ENCODE measurements at regions of chr1 and their contacts with region 1.

Region 1: DNA sequence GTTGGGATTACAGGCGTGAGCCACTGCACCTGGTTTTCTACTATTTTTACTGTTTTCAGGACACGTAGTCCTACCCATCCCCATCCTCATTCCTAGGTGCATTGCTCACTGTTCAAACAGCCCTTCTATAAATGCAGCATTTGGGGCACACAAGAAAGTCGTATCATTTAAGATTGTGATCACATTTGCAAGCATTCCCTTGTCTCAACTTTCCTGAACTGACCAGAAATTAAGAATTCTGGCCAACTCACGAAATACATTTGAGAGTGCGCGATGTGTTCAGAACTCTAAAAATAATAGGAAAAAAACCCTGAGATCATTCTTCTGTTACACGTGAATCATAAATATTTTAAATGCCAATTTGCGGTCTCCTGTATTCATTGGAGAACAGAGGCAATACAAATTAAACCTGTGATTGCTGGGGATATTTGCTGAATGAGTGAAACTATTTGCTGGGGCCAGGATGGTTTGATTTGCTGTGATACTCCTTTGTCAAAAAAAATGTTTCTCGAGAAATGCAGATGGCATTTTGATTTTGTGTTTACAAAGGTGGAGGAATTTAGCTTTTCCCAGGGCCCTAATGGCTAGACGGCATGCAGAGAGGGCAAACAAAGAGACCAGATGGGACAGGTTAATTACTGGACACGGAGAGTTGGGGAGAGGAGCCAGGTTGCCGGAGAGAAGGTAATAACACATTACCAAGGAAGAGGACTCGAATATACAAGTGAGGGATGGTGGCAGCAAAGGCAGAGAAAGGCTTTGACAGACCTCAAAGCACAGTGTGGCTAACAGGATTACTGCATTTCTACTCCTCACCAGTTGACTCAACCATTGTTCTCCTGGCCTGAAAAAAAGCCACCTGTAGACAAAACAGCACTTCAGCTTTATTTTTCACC is 38.4 kb downstream of the STPG1 start:
- DNase-seq: peak in 1 of 2 experiments; percentile 41
- H3K4me3 ChIP-seq: no peak overlapping the region
- H3K27ac ChIP-seq: no peak overlapping the region
- H3K4me1 ChIP-seq: peaks cover 0 to 13% (median 6%) of the 10 kb centered on the region in 4 experiments; a peak in 3 of 7 replicates
- H3K27me3 ChIP-seq: no peaks in the 10 kb centered on the region
- CTCF ChIP-seq: no peak
- EP300 ChIP-seq: 0 out of 3 replicates have a peak, but pooled peaks of 1 of the 2 experiments have one; percentile 68
- POLR2A ChIP-seq: no peak
- RAD21 ChIP-seq: no peak

Region 2: DNA sequence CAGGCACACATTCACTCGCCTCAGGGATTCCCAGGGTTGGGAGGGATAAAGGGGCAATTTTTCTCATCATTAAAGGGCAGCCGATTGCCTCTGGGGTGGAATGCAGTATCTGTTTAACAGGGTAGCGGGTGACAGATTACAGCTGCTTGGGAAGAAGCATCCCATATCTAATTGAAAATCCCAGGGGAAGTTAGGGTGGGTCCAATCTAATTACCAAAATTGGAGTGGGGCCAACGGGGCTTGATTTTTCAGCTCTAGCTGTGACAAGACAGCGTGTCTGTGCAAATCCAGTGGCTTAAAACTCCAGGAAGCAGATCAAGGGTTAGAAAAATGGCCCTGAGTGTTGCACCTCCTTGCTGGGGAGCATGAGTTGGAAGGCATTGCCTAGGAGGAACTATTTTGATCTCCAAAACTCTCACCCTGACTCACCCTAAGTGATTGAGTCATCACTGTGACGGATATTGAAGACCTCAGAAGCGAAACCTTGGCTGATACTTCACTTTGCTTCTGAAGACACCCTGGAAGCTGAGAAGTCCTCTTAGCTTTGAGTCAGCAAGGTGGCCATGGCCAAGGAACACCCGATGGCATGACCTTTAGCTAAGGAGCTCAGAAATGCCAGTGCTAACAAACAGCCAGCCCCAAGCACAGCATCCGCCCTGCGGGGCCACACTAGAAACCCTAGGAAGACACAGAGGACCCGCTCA is 10.0 kb before region 1 on chr1:
- CTCF ChIA-PET with region 1: interaction called, 13 read pairs
- POLR2A ChIA-PET with region 1: no interaction called
- DNase-seq: no peak
- H3K4me3 ChIP-seq: no peak overlapping the region
- H3K27ac ChIP-seq: no peak overlapping the region
- H3K4me1 ChIP-seq: no peaks in the 10 kb centered on the region; a peak in 2 of 7 replicates
- H3K27me3 ChIP-seq: no peaks in the 10 kb centered on the region
- CTCF ChIP-seq: no peak
- EP300 ChIP-seq: no peak
- POLR2A ChIP-seq: no peak
- RAD21 ChIP-seq: no peak

Region 3: DNA sequence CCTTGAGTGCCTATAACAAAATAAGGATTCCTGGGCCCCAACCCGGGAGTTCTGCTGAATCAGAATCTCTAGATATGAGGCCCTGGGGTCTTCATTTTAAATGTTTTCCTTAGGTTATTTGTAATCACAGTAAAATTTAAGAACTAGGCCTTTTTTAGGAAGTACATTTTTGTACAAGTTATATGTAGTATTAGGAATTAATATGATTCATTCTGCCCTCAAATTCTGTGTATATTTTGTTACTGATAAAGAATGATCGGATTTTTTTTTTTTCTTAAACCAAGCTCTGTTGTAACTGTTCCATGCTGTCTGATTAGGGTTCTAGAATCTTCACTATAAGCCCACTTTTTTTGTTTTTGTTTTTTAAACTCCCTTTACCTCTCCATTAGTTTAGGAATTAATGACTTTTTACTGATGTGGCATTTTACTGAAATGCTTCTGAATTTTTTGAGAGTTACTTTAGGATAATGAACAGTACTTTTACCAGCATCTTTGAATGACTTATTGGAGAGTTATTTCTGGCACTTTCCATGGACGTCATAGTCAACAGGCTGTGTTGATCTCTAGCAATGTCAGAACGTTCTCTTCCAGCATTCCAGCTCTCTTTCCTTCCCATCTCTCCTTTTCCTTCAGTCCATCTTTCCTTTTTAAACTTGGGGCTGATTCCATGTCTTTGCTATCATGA is 418.4 kb after region 1 on chr1:
- CTCF ChIA-PET with region 1: no interaction called
- POLR2A ChIA-PET with region 1: no interaction called
- DNase-seq: no peak
- H3K4me3 ChIP-seq: no peak overlapping the region
- H3K27ac ChIP-seq: no peak overlapping the region
- H3K4me1 ChIP-seq: no peaks in the 10 kb centered on the region
- H3K27me3 ChIP-seq: no peaks in the 10 kb centered on the region
- CTCF ChIP-seq: no peak
- EP300 ChIP-seq: no peak
- POLR2A ChIP-seq: no peak
- RAD21 ChIP-seq: no peak